Gastrocnemius medialis (tissue), 4 donors: ENCODE measurements at regions of chr9 and their contacts with region 1.

Region 1: GRCh38 chr9:131423171-131423581 is 29.3 kb downstream of the PRRC2B start:
- DNase-seq: peak in 1 of 2 donors; percentile 66
- ATAC-seq: peak; percentile 71 to 81
- H3K4me3 ChIP-seq: peak overlapping the region in 1 of 4 donors; percentile 13
- H3K27ac ChIP-seq: peak overlapping the region; percentile 64 to 69 (median 67)
- H3K4me1 ChIP-seq: peaks cover 56 to 63% of the 10 kb centered on the region in 2 donors
- H3K27me3 ChIP-seq: no peaks in the 10 kb centered on the region
- CTCF ChIP-seq: no peak
- POLR2A ChIP-seq: no peak

Region 2: DNA sequence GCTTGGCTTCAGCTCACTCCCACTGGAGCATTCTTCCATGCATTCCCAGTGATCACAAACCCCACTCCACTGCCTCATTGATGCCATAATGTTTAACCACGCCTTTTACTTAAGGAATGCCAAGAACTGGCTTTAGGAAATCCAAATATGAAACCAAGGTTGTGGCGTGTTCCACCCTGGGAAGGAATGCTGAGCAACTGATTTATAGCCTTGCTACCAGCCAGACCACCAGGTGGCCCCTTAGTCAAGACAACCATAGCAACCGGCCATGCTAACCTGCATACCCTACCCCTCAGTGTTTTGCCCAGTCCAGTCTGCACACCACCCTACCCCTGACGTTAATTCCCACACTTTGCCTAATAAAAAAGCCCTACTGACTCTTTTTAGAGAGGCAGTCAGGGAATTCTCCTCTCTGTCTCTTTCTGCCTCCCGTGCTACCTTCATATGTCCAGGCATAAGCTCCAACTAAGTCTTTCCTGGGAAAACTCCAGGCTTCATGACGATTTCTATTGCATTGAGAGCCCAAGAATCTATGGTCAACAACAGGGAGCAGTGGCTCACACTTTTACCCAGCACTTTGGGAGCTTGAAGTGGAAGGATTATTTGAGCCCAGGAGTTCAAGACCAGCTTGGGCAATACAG is 56.3 kb before region 1 on chr9:
- in situ Hi-C with region 1: no loop called
- intact Hi-C with region 1: loop called (anchors 2 kb)
- DNase-seq: no peak
- ATAC-seq: no peak
- H3K4me3 ChIP-seq: no peak overlapping the region
- H3K27ac ChIP-seq: no peak overlapping the region
- H3K4me1 ChIP-seq: peaks cover 0 to under 1% of the 10 kb centered on the region in 2 donors
- H3K27me3 ChIP-seq: no peaks in the 10 kb centered on the region
- CTCF ChIP-seq: peak in 3 of 5 experiments; percentile 26 to 35 (median 32)
- POLR2A ChIP-seq: no peak

Region 3: GRCh38 chr9:131393622-131394463 is 29.3 kb before region 1 on chr9 and contains the start of gene PRRC2B:
- in situ Hi-C with region 1: no loop called
- intact Hi-C with region 1: loop called (anchors 2 kb)
- DNase-seq: peak; percentile 77 to 79
- ATAC-seq: peak; percentile 70 to 80
- H3K4me3 ChIP-seq: peak within 1 kb of the TSS; percentile 56 to 65 (median 60)
- H3K27ac ChIP-seq: peak within 1 kb of the TSS; percentile 93 to 96 (median 94)
- H3K4me1 ChIP-seq: peaks cover 40% of the 10 kb centered on the region in 2 donors
- H3K27me3 ChIP-seq: no peaks in the 10 kb centered on the region
- CTCF ChIP-seq: peak in 3 of 5 experiments; percentile 38 to 96 (median 47)
- POLR2A ChIP-seq: peak; percentile 78
- total RNA-seq, gene PRRC2B: 29.9 to 41.6 (median 37.2) TPM

Region 4: GRCh38 chr9:131402738-131403492 is 20.3 kb before region 1 on chr9:
- in situ Hi-C with region 1: no loop called
- intact Hi-C with region 1: loop called (anchors 2 kb)
- DNase-seq: peak; percentile 84 to 93
- ATAC-seq: peak; percentile 75 to 79
- H3K4me3 ChIP-seq: peak overlapping the region; percentile 15 to 50 (median 28)
- H3K27ac ChIP-seq: peak overlapping the region; percentile 85 to 96 (median 92)
- H3K4me1 ChIP-seq: peaks cover 98 to 99% of the 10 kb centered on the region in 2 donors
- H3K27me3 ChIP-seq: no peaks in the 10 kb centered on the region
- CTCF ChIP-seq: no peak
- POLR2A ChIP-seq: peak in 1 of 2 donors; percentile 22